Vagina (tissue), 2 donors: ENCODE measurements at regions of chr1 and their contacts with region 1.

Region 1: GRCh38 chr1:10429868-10430215 is 391 bp upstream of the CENPS start:
- DNase-seq: no peak
- H3K4me3 ChIP-seq: peak overlapping the region; percentile 71 to 80
- H3K27ac ChIP-seq: peak overlapping the region; percentile 81
- H3K4me1 ChIP-seq: peaks cover 23% of the 10 kb centered on the region
- H3K27me3 ChIP-seq: no peaks in the 10 kb centered on the region
- CTCF ChIP-seq: no peak
- POLR2A ChIP-seq: no peak

Region 2: DNA sequence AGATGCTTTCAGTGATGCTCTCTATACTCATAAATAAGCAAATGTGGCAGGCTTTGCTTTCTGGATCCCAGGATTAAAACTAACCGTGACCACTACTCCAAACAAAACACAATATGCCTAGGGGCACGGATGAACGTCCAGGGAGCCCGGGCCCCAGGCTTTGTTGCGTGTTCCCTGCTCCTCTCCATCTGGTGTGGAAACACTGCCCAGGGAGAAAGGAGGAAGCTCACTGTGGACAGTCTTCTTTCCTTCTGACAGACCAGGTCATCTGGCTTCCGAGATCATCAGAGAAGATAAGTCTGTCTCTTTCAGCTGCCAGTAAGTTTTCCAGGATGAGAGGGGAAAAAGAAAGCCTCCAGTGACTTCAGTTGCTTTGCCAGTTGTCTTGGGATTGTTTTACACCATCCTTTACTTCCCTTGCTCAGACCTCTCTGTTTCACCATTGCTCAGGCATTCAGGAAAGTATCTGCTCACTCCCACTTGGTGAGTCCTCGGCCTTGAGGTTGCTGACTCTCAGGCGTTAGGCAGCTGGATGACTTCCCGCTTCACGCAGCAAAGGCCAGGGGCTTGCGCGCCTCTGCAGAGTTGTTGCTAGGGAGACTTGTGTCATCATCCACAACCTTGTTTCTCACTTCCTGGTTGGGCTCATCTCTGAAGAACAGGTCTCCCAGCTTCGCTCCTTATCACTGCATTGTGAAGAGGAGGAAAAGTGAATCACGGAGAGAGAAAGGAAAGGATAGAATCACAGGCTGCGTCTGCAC is 51.6 kb before region 1 on chr1:
- intact Hi-C with region 1: loop called (anchors 2 kb)
- DNase-seq: no peak
- H3K4me3 ChIP-seq: no peak overlapping the region
- H3K27ac ChIP-seq: no peak overlapping the region
- H3K4me1 ChIP-seq: peaks cover 4% of the 10 kb centered on the region
- H3K27me3 ChIP-seq: no peaks in the 10 kb centered on the region
- CTCF ChIP-seq: no peak
- POLR2A ChIP-seq: no peak

Region 3: DNA sequence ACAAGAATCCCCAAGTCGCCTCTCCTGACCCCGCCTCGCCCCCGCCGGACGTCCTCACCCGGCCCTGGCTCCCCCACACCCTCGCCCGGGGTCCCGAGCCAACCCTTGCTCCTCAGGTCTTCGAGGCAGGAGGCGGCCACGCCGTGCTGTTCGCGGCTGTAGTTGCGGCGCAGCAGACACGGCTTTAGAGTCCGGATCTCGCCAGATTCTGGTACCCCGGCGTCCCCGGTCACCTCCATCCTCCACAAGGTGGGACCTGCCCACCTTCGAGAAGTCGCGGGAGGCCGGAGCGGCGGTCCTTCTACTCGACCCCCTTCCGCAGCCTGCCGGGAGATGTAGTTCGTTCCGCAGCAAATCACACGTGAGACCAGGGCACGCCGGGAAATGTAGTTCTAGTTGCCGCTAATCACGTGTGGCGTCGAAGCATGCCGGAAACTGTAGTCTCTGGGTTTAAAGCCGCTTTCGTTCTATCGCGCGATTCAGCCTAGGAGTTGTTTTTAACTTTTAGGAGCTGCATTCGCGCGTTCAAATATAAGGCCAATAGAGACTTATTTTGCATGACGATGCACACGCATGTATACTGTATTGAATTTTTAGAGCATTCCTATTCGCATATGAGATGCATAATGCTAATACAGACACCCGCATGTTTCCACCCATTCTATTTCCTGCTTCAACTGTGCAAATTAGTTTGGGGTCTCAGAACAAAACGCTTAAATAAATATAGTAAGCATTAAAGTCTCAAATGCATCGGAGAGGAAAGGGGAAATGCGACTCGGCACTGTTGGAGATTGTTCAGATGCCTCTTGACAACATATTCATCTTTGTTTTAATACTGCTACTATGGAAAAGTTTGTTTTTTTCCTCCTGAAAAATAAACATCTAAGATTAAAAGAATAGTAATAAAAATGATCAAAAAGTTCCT is 42.6 kb after region 1 on chr1 and contains the start of gene DFFA:
- intact Hi-C with region 1: no loop called
- DNase-seq: peak in 1 of 2 donors; percentile 94
- H3K4me3 ChIP-seq: peak within 1 kb of the TSS; percentile 77 to 81
- H3K27ac ChIP-seq: peak within 1 kb of the TSS; percentile 78
- H3K4me1 ChIP-seq: peaks cover 28% of the 10 kb centered on the region
- H3K27me3 ChIP-seq: no peaks in the 10 kb centered on the region
- CTCF ChIP-seq: no peak
- POLR2A ChIP-seq: no peak
- total RNA-seq, gene DFFA: 16.2 TPM

Region 4: GRCh38 chr1:10555614-10556429 is 126.0 kb after region 1 on chr1:
- intact Hi-C with region 1: no loop called
- DNase-seq: no peak
- H3K4me3 ChIP-seq: no peak overlapping the region
- H3K27ac ChIP-seq: no peak overlapping the region
- H3K4me1 ChIP-seq: no peaks in the 10 kb centered on the region
- H3K27me3 ChIP-seq: no peaks in the 10 kb centered on the region
- CTCF ChIP-seq: no peak
- POLR2A ChIP-seq: no peak